PC-3 (cell line): ENCODE measurements at regions of chr18 and their contacts with region 1.

Region 1: DNA sequence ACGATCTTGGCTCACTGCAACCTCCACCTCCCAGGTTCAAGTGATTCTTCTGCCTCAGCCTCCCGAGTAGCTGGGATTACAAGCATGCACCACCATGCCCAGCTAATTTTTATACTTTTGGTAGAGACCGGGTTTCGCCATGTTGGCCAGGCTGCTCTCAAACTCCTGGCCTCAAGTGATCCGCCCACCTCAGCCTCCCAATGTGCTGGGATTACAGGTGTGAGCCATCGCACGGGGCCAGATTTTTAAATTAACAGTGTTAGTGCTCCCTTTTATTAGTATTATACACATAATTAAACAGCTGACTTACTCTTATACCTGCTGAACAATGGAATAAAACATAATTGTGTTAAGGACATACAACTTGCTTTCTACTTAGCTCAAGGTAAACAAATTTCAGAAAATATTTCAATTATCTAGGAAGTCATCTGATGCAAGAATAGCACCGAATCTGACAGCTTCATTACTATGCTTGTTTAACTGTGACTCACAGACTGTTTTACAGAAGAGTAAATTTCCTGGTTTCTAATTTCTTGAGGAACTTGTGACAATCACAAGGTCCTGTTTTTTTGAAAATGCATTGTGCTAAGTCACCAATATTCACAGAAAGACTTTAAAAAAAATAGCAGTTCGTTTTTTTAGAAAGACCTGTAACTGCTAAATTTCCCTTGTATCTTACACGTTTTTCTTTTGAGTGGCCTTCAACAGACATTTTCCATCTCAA is 51.2 kb downstream of the SPIRE1 start:
- DNase-seq: peak; percentile 83
- ATAC-seq: peak; percentile 79
- H3K4me3 ChIP-seq: peak overlapping the region; percentile 46; the same call in 1 of the 2 replicates
- H3K27ac ChIP-seq: peak overlapping the region; percentile 95
- H3K4me1 ChIP-seq: peaks cover 47% of the 10 kb centered on the region
- H3K27me3 ChIP-seq: no peaks in the 10 kb centered on the region
- CTCF ChIP-seq: no peak

Region 2: GRCh38 chr18:12038639-12039417 is 567.9 kb before region 1 on chr18:
- CTCF ChIA-PET with region 1: no interaction called
- POLR2A ChIA-PET with region 1: no interaction called
- intact Hi-C with region 1: no loop called
- DNase-seq: peak; percentile 83
- ATAC-seq: peak; percentile 93
- H3K4me3 ChIP-seq: peak overlapping the region; percentile 74
- H3K27ac ChIP-seq: no peak overlapping the region
- H3K4me1 ChIP-seq: peaks cover 13% of the 10 kb centered on the region; the same call in 1 of the 2 replicates
- H3K27me3 ChIP-seq: no peaks in the 10 kb centered on the region
- CTCF ChIP-seq: peak; percentile 94

Region 3: GRCh38 chr18:12543697-12544096 is 63.1 kb before region 1 on chr18:
- CTCF ChIA-PET with region 1: no interaction called
- POLR2A ChIA-PET with region 1: no interaction called
- intact Hi-C with region 1: loop called (anchors 1 kb)
- DNase-seq: peak; percentile 85
- ATAC-seq: peak; percentile 72
- H3K4me3 ChIP-seq: peak overlapping the region; percentile 40
- H3K27ac ChIP-seq: peak overlapping the region; percentile 74
- H3K4me1 ChIP-seq: peaks cover 34% of the 10 kb centered on the region
- H3K27me3 ChIP-seq: no peaks in the 10 kb centered on the region
- CTCF ChIP-seq: no peak

Region 4: DNA sequence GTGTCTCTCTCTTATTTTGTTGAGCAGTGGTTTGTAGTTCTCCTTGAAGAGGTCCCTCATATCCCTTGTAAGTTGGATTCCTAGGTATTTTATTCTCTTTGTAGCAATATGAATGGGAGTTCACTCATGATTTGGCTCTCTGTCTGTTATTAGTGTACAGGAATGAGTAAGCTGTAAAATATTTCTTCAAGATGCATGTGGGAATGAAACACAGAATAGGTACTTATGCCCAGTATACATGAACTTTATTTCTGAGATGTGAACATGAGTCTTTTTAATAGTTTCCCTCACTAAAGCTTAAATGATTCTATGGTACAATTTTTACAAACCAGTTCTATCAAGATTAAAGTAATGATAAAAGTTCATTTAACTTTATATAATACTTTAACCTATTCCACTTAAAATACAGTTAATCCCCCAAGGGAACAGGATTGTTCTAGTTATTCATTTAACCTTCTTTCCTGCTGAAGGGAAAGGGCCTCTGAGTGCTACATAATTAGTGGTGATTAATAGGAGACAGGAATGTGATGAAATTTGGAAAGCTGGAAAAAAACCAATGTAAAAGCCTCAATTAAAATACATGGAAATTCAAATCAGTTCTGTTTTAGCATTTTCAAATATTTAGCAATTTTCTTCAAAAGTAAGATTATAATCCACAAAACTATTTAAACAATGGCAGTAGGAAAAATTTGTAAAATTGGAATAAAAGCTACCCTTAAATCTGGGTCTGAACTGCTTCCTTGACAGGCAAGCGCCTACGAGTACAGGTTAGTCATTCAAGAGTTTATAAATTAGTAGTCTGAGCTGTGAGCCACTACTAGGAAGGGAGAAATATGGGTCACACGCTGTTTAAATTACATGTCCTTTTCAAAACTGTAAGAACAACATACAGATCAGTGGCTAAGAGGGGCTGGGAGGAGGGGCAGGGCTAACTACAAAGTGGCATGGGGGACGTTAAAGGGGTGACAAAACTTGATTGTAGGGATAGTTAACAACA is 22.2 kb after region 1 on chr18:
- CTCF ChIA-PET with region 1: interaction called, 6 read pairs
- POLR2A ChIA-PET with region 1: interaction called, 12 read pairs
- intact Hi-C with region 1: no loop called
- DNase-seq: peak; percentile 73
- ATAC-seq: peak; percentile 77
- H3K4me3 ChIP-seq: no peak overlapping the region
- H3K27ac ChIP-seq: peak overlapping the region; percentile 76
- H3K4me1 ChIP-seq: peaks cover 35% of the 10 kb centered on the region
- H3K27me3 ChIP-seq: no peaks in the 10 kb centered on the region
- CTCF ChIP-seq: no peak

Region 5: DNA sequence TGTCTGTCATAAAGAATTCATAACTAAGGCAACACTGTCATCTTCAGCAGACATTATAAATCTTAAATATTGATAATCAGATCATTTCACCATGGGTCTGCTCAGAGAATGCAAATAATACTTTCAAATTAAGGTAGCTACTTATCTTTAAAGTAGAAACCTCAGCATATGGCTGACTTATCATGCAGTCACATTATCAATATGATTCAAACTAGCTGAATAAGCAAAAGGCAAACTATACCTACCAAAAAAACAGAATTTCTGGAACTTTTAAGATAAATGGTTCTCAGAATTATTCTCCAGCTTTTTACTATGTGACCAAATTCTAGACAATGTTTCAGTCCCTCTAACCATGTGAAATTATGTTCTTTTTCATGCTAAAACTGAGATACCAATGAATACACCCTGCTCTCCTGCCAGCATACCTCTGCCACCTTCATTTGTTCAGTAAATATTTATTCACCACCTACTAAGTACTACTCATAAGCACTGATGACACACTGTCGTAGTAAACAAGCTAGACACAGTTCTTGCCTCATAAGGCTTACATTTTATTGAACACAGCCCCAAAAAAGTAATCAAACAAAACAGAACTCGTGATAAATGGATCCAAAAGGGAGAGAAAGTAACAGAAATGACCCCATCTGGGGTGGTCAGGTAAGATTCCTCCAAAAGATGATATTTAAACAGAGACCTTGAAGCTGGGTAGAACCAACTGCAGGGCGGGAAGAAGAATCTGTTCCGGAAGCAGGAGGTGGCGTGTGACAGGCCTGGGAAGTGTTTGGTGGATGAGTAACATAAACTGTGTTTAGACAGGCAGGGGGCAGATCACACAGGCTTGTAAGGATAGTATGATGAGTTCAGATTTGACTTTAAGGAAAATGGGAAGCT is 33.5 kb after region 1 on chr18:
- CTCF ChIA-PET with region 1: interaction called, 3 read pairs
- POLR2A ChIA-PET with region 1: interaction called, 9 read pairs
- intact Hi-C with region 1: loop called (anchors 1 kb)
- DNase-seq: peak; percentile 91
- ATAC-seq: peak; percentile 89
- H3K4me3 ChIP-seq: peak overlapping the region; percentile 48
- H3K27ac ChIP-seq: peak overlapping the region; percentile 95
- H3K4me1 ChIP-seq: peaks cover 78% of the 10 kb centered on the region
- H3K27me3 ChIP-seq: no peaks in the 10 kb centered on the region
- CTCF ChIP-seq: 0 out of 2 replicates have a peak, but pooled peaks have one; percentile 19